Activated T-helper 1 cell treated with anti-CD3 and anti-CD28 coated beads, Interleukin-12 subunit alpha, Interleukin-12 subunit beta, Interleukin-2, Interleukin-4 antibody, amounts not matched to agents 30 ng/mL and 10 ng/mL and 1 ng/mL, durations not matched to agents 14 hours and 24 hours and 36 hours (primary cell): ENCODE measurements at regions of chr13 and their contacts with region 1.

Region 1: GRCh38 chr13:50365408-50366391 is 350.5 kb downstream of the KCNRG start:
- DNase-seq: peak; percentile 54
- H3K4me3 Mint-ChIP-seq: peak overlapping the region; percentile 66
- H3K27ac Mint-ChIP-seq: peak overlapping the region; percentile 75
- H3K4me1 Mint-ChIP-seq: peaks cover 48% of the 10 kb centered on the region
- H3K27me3 Mint-ChIP-seq: peaks cover 32% of the 10 kb centered on the region

Region 2: DNA sequence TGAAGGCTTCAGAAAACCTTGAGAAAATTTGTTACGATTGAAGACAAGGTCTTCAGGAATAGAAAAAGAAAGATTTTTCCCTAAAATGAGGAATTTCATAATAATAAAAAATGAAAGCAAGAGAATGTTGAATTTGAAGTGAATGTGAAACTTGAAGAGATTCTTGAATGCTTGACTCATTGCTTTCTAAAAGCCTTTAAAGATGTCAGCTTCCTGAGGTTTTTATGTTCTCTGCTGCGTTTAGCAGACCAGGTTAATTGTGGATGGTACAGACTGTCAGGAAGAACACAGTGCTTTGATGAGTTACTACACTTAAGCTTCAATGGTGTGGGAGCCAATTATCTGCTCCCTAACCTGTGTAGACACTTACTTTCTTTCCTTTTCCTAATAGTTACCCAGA is 1486.3 kb before region 1 on chr13:
- intact Hi-C with region 1: loop called (anchors 5 kb)
- DNase-seq: no peak
- H3K4me3 Mint-ChIP-seq: peak overlapping the region; percentile 1
- H3K27ac Mint-ChIP-seq: peak overlapping the region; percentile 1
- H3K4me1 Mint-ChIP-seq: peaks cover 52% of the 10 kb centered on the region
- H3K27me3 Mint-ChIP-seq: peaks cover 6% of the 10 kb centered on the region

Region 3: GRCh38 chr13:49996951-49997895 is 368.5 kb before region 1 on chr13 and contains the start of gene TRIM13:
- intact Hi-C with region 1: loop called (anchors 1 kb)
- DNase-seq: peak; percentile 76
- H3K4me3 Mint-ChIP-seq: peak within 1 kb of the TSS; percentile 87
- H3K27ac Mint-ChIP-seq: peak within 1 kb of the TSS; percentile 82
- H3K4me1 Mint-ChIP-seq: peaks cover 54% of the 10 kb centered on the region
- H3K27me3 Mint-ChIP-seq: no peaks in the 10 kb centered on the region
- total RNA-seq, gene TRIM13: 14.7 and 16.5 TPM in 2 replicates

Region 4: DNA sequence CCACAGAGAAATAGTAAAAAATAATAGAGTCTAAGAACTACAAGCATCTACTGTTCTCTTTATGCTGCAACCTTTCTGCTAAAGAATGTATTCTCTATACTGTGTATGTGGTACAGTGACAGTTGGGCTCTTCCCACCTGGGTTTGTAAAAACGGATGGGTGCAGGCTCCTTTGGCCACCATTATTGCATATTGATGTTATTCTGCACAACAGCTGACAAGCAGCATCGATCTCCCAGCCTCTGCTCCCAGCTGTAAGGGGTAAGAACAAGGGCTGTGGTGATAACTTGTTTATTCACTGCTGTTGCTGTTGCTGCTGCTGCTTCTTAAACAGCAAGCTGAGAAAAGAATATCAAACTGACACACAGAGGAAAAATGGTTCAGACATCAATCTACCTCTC is 294.3 kb before region 1 on chr13:
- intact Hi-C with region 1: no loop called
- DNase-seq: no peak
- H3K4me3 Mint-ChIP-seq: peak overlapping the region; percentile 15
- H3K27ac Mint-ChIP-seq: peak overlapping the region; percentile 34
- H3K4me1 Mint-ChIP-seq: peaks cover 65% of the 10 kb centered on the region
- H3K27me3 Mint-ChIP-seq: no peaks in the 10 kb centered on the region

Region 5: DNA sequence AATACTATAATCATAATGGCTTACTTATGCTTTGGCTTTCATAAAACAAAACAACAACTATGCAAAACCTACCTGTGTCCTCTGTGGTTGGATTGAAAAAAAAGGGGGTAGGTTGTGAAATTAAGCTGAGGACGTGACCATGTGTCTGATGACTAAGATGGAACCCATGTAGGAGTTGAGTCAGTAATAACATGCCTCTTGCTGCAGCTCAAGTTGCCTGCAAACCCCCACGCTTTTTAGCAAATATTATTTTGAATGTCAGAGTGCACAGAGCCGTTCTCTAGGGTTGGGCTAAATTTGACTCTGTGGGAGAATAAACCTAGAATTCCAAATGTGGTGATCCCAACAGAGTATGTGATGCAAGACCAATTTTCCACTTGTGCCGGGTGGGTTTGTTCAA is 141.2 kb before region 1 on chr13:
- intact Hi-C with region 1: loop called (anchors 1 kb)
- DNase-seq: no peak
- H3K4me3 Mint-ChIP-seq: peak overlapping the region; percentile 12
- H3K27ac Mint-ChIP-seq: peak overlapping the region; percentile 24
- H3K4me1 Mint-ChIP-seq: peaks cover 75% of the 10 kb centered on the region
- H3K27me3 Mint-ChIP-seq: peaks cover 38% of the 10 kb centered on the region

Region 6: GRCh38 chr13:50255639-50256038 is 110.1 kb before region 1 on chr13:
- intact Hi-C with region 1: loop called (anchors 1 kb)
- DNase-seq: no peak
- H3K4me3 Mint-ChIP-seq: no peak overlapping the region
- H3K27ac Mint-ChIP-seq: peak overlapping the region; percentile 62
- H3K4me1 Mint-ChIP-seq: peaks cover 69% of the 10 kb centered on the region
- H3K27me3 Mint-ChIP-seq: peaks cover 46% of the 10 kb centered on the region

Region 7: DNA sequence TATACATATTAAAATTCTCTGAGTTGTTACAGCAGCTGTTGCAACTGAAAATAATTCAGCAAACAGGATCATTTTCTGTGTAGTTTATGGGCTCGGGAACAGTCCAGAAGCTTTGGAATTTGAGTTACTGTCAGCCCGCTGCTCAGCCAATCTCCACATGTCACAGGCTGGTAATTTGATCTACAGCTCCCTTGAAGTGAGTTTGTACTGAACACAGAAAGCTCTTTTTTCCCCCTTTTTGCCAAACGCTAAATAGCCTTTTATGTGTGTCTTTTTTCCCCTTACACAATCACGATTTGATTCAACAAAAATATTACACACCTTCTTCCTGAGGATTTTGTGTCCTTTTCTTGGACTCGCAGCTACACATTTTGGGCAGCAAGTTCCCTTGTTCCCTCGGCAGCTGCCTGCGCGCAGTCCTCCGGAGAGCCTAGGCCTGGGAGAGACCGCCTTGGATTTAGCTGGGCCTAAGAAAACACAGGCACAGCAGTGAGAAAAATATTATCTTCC is 20.9 kb after region 1 on chr13:
- intact Hi-C with region 1: no loop called
- DNase-seq: no peak
- H3K4me3 Mint-ChIP-seq: no peak overlapping the region
- H3K27ac Mint-ChIP-seq: no peak overlapping the region
- H3K4me1 Mint-ChIP-seq: peaks cover 13% of the 10 kb centered on the region
- H3K27me3 Mint-ChIP-seq: peaks cover 24% of the 10 kb centered on the region

Region 8: GRCh38 chr13:50521831-50522149 is 156.1 kb after region 1 on chr13:
- intact Hi-C with region 1: no loop called
- DNase-seq: no peak
- H3K4me3 Mint-ChIP-seq: no peak overlapping the region
- H3K27ac Mint-ChIP-seq: no peak overlapping the region
- H3K4me1 Mint-ChIP-seq: peaks cover 23% of the 10 kb centered on the region
- H3K27me3 Mint-ChIP-seq: peaks cover 19% of the 10 kb centered on the region

Region 9: DNA sequence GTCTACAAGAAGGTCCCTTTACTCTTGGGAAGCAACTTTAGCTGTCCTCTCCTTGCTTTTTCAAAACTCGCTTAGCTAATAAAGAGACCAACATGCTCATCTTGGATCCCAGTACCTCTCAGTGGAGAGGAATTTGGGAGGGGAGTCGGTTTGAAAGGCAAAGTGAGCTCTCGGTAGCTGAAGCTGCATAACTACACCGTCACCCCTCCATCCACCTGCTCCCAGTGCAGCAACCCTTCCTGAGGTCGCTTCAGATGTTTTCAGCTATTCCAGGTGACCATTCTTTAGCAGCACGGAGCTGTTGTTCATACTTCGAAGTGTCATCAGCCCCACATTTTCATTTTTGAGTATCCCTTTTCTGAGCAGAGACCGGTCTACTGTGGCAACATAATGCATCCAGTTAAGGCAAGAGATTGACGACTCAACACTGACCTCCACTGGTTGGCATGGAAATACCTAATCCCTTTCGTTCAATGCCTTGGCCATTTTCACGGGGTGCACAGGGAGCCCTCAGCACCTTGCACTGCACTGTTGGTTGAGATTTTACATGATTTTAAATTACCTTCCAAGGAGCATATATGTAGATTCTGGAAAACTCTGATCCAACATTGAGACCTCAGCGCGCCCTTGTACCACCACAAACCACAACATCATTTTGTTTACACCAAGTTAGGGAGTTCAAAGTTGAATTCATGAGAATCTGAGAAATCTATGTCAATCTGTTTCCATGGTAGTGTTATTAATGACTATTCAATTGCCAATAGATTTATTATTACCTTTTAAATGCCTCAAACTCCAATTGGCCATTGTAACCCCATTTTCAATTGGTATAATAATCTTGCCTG is 435.6 kb after region 1 on chr13:
- intact Hi-C with region 1: loop called (anchors 10 kb)
- DNase-seq: peak; percentile 50
- H3K4me3 Mint-ChIP-seq: no peak overlapping the region
- H3K27ac Mint-ChIP-seq: no peak overlapping the region
- H3K4me1 Mint-ChIP-seq: peaks cover 25% of the 10 kb centered on the region
- H3K27me3 Mint-ChIP-seq: no peaks in the 10 kb centered on the region

Region 10: GRCh38 chr13:51452361-51453206 is 1086.9 kb after region 1 on chr13 and contains the start of gene INTS6:
- intact Hi-C with region 1: loop called (anchors 5 kb)
- DNase-seq: peak; percentile 99
- H3K4me3 Mint-ChIP-seq: peak within 1 kb of the TSS; percentile 92
- H3K27ac Mint-ChIP-seq: peak within 1 kb of the TSS; percentile 98
- H3K4me1 Mint-ChIP-seq: peaks cover 52% of the 10 kb centered on the region
- H3K27me3 Mint-ChIP-seq: no peaks in the 10 kb centered on the region
- total RNA-seq, gene INTS6: 76.6 and 81.7 TPM in 2 replicates